PC-3 (cell line): ENCODE measurements at regions of chr1 and their contacts with region 1.

Region 1: DNA sequence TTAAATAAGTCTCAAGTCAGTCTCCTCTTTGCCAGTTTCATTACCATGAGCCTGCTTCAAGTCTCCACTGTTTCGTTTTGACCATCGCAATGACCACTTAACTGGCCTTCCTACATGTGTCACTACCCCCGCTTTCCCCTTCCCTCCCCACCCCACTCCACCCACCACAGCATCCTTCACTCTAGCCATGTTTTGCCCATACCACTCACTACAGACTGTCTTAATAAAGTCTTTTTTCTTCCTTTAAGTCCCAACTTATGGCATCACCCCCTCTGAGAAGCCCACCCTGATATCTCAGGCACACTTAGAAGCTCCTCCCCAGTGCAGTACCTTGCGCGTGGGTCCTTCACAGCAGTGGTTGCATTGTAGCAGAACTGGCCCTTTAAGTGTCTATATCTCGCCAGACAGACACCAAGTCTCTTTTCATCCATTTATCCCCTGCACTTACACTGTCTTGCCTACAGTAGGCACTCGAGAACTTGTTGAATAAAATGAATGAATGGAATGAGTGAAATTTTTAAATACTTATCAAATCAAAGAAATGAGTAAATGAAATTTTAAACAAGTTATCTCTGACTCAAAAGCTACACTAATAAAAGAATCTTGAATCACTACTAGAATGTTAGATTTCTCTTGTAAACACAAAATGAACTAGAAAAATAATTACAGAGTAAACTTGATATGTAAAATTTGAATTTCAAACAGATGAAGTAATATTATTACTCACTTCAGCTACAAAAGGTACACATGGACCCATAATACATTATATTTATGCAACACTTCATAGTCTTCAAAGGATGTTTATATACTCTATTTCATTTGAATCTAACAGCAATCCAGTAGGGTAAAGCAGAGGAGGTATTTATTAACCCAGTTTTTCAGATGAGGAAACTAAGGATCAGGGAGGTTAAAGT is 54.8 kb upstream of the MAN1A2 start:
- DNase-seq: peak; percentile 66
- ATAC-seq: peak; percentile 82
- H3K4me3 ChIP-seq: no peak overlapping the region
- H3K27ac ChIP-seq: no peak overlapping the region
- H3K4me1 ChIP-seq: no peaks in the 10 kb centered on the region
- H3K27me3 ChIP-seq: no peaks in the 10 kb centered on the region
- CTCF ChIP-seq: peak; percentile 78

Region 2: GRCh38 chr1:117215733-117216448 is 96.6 kb before region 1 on chr1:
- CTCF ChIA-PET with region 1: no interaction called
- POLR2A ChIA-PET with region 1: no interaction called
- intact Hi-C with region 1: no loop called
- DNase-seq: no peak
- ATAC-seq: no peak; the same call in 1 of the 2 replicates
- H3K4me3 ChIP-seq: no peak overlapping the region
- H3K27ac ChIP-seq: no peak overlapping the region
- H3K4me1 ChIP-seq: peaks cover 5% of the 10 kb centered on the region; the same call in 1 of the 2 replicates
- H3K27me3 ChIP-seq: no peaks in the 10 kb centered on the region
- CTCF ChIP-seq: no peak

Region 3: DNA sequence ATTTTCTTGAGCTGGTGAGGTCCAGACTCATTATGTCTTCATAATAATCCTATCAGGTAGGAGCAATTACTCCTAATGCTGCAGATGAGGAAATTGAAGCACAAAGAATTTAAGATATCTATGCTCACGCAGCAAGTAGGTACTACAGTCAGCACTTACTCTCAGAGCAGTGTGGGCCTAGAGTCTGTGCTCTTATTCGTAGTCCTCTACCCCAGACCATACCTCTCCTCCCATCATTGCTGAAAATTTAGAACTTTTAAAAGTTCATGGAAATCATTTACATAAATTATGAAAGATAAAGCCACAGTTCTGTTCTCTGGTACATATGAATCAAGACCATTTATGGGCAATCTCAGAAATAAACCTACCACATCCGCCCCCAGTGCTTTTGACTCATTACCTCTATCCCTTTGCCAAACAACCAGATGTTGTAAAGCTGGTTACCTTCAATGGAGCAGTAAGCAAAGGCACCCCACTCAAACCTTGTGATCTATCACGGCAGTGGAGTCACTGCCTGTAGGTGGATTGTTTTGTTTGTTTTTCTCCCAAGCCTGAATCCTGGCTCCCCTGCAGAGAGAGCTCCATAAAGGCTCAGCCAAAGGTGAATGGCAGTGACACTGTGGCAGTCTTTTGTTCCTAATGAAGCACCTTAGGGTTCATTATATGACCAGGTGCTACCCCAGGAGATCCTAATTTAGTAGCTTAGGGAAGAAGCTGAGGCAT is 33.9 kb after region 1 on chr1:
- CTCF ChIA-PET with region 1: no interaction called
- POLR2A ChIA-PET with region 1: no interaction called
- intact Hi-C with region 1: loop called (anchors 2 kb)
- DNase-seq: peak; percentile 85
- ATAC-seq: peak; percentile 90
- H3K4me3 ChIP-seq: no peak overlapping the region
- H3K27ac ChIP-seq: peak overlapping the region; percentile 43
- H3K4me1 ChIP-seq: peaks cover 15% of the 10 kb centered on the region
- H3K27me3 ChIP-seq: no peaks in the 10 kb centered on the region
- CTCF ChIP-seq: no peak

Region 4: DNA sequence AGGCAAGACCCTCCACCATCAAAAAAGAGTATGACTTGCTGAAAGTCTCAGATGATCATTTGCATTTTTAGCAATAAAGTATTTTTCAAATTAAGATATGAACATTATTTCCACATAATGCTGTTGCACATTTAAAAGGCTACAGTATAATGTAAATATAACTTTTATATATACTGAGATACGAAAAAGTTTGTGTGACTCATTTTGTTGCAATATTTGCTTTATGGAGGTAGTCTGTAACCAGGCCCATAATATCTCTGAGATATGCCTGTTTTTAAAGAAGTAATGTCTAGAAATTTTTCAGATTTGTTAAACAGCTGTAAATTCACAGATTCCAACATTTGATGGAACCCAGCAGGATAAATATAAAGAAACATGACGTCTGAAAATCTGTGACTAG is 141.5 kb after region 1 on chr1:
- CTCF ChIA-PET with region 1: no interaction called
- POLR2A ChIA-PET with region 1: no interaction called
- intact Hi-C with region 1: loop called (anchors 10 kb)
- DNase-seq: peak; percentile 55
- ATAC-seq: peak; percentile 95
- H3K4me3 ChIP-seq: no peak overlapping the region
- H3K27ac ChIP-seq: no peak overlapping the region
- H3K4me1 ChIP-seq: peaks cover 16% of the 10 kb centered on the region
- H3K27me3 ChIP-seq: no peaks in the 10 kb centered on the region
- CTCF ChIP-seq: no peak

Region 5: DNA sequence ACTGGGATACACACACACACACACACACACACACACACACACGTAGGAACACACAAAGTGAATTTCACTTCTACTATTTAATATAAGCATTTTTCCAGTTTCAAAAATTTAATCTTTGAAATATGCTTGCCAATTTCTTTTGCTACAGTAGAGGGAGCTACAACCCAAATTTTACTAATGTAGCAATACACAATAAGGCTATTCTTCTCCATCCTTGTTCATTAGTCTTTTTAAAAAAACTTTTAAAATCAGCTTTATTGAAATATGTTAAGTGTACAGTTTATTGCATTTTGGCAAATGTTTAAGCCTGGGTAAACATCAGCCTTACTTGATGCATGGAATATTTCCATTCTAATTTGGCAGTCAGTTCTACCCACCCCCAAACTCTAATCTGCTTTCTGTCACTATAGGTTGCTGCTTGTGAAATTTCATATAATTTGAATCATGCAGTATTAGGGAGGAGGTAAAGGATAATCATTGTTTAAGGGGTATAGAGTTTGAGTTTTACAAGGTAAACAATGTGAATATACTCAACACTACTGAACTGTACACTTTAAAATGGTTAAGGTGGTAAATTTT is 200.3 kb after region 1 on chr1:
- CTCF ChIA-PET with region 1: no interaction called
- POLR2A ChIA-PET with region 1: no interaction called
- intact Hi-C with region 1: loop called (anchors 2 kb)
- DNase-seq: peak; percentile 63
- ATAC-seq: peak; percentile 69
- H3K4me3 ChIP-seq: no peak overlapping the region
- H3K27ac ChIP-seq: no peak overlapping the region
- H3K4me1 ChIP-seq: no peaks in the 10 kb centered on the region
- H3K27me3 ChIP-seq: no peaks in the 10 kb centered on the region
- CTCF ChIP-seq: peak; percentile 83